Ascending aorta (tissue), 2 donors: ENCODE measurements at regions of chr9 and their contacts with region 1.

Region 1: DNA sequence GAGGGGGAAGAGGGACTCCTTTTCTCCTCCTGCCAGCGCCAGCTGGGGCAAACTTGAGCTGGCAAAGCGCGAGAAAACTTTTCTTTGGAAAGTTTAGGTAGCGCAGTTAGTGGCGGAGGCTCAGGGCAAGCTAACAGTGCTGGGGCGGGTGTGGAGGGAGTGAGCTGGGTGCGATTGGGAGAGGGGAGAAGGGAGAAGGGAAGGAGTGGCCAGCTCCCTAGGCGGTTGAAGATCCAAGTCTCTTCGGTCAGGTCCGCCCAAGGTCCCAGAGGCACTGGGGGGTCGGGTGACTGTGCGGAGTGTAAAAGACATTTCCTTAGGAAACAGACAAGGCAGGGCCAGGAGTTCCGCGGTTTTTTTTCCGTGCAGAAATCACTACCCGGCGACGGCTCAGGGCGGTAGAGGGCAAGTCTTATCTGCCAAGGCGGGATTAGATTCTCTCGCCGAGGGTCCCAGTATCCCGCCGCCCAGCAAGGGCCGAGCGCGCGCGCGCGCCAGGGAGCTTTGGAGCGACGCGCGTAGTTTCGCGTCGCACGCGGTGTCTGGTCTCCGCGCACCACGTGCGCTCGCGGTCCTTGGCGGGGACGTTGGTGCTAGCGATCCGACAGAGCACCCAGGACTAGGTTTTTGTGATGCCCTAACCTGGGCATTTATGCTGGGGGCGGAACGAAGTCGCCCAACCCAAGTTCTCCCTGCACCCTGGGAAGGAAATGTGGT is 33.6 kb upstream of the NFIB start:
- DNase-seq: no peak
- H3K4me3 ChIP-seq: peak overlapping the region; percentile 58 to 68
- H3K27ac ChIP-seq: peak overlapping the region; percentile 87 to 90
- H3K4me1 ChIP-seq: peaks cover 0 to 33% of the 10 kb centered on the region in 2 donors
- H3K27me3 ChIP-seq: no peaks in the 10 kb centered on the region
- CTCF ChIP-seq: peak in 1 of 3 experiments; percentile 26

Region 2: GRCh38 chr9:14030375-14031059 is 317.0 kb before region 1 on chr9:
- intact Hi-C with region 1: loop called (anchors 5 kb)
- DNase-seq: no peak
- H3K4me3 ChIP-seq: peak overlapping the region; percentile 39 to 58
- H3K27ac ChIP-seq: peak overlapping the region; percentile 80 to 84
- H3K4me1 ChIP-seq: peaks cover 6 to 24% of the 10 kb centered on the region in 2 donors
- H3K27me3 ChIP-seq: no peaks in the 10 kb centered on the region
- CTCF ChIP-seq: no peak

Region 3: DNA sequence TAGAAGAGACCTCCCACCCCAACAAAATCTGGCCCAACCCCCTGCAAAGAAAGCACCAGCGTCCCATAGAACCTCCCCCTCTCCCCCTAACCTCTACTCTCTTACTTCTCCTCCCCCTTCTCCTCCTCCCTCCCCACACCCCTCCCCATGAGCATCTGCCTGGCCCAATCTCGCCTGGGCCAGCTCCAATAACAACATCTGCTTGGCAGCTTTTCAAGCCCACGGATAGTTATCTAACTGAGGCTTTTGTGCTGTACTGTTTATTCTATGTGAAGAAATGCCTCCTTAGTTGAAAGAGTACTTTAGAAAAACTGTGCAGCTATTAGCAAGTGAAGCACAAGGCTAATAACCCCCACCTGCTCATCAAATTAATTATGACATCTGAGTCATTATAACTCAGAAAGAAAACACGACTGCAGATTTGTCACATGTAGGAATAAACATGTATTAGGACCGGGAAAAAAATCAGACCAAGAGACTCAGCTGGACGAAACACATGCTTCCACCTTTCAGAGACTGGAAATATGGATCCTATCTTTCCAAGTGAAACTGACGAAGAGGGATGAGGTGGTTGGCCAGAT is 76.4 kb before region 1 on chr9:
- intact Hi-C with region 1: no loop called
- DNase-seq: no peak
- H3K4me3 ChIP-seq: peak overlapping the region in 1 of 2 donors; percentile 1
- H3K27ac ChIP-seq: no peak overlapping the region
- H3K4me1 ChIP-seq: peaks cover 13 to 44% of the 10 kb centered on the region in 2 donors
- H3K27me3 ChIP-seq: no peaks in the 10 kb centered on the region
- CTCF ChIP-seq: no peak

Region 4: DNA sequence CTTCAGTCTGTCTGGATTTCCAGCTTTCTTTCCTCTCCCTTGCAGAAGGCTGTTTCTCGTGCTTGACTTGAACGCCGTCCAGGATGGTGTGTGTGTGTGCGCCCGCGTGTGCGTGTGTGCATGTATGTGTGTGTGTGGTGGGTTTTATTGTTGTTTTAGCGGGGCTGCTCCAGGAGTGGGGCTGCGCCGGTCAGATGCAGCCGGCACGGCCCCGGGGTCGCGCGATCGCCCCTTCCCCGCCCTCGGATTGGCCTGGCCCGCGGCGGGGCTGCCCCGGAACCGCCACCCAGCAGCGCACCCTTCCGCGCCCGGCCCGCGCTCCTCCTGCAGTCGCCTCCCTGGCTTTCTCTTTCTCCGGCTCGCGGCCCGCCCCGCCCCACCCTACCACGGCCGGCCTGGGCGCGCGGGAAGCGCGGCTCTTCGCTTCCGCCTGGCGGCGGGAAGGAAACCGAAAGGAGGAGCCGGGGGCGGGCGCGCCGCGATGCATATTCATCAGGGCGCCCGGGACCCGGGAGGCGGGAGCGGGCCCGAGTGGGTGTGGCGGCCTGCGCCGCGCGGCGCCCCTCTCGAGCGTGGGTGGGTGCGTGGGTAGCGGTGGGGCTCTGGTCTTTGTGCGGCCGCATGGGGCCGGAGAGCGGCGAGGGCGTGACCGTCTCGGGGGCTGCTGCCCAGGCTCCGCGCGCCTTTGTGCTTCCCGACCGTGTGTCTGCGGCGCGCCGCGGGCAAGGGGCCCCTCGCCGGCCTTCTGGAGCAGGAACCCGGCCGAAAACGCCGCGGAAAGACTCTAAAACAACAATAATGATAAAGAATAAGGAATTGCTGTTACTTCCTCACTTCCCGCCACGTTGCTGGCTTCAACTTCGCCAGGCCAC is 25.1 kb before region 1 on chr9:
- intact Hi-C with region 1: loop called (anchors 1 kb)
- DNase-seq: peak; percentile 51 to 94
- H3K4me3 ChIP-seq: peak overlapping the region; percentile 88 to 95
- H3K27ac ChIP-seq: peak overlapping the region; percentile 96 to 98
- H3K4me1 ChIP-seq: peaks cover 7 to 24% of the 10 kb centered on the region in 2 donors
- H3K27me3 ChIP-seq: no peaks in the 10 kb centered on the region
- CTCF ChIP-seq: peak; percentile 47 to 69 (median 63)

Region 5: DNA sequence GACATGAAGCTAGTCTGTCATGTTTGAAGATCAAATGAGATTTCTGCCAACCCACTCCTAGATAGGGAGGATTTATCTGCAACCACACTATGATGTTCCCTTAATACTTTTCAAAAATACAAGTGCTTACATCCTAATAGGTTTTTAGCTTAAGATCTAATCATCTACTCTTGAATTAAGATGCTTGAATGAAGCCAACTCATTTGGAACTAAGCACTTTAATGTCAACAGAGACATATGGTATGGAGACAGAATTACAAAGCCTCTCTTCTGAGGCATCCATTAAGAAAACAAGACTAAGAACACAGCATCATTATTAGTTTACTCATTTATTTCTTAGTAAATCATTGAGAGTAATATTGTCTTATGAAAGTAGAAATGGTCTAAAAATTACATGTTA is 105.7 kb after region 1 on chr9:
- intact Hi-C with region 1: no loop called
- DNase-seq: no peak
- H3K4me3 ChIP-seq: no peak overlapping the region
- H3K27ac ChIP-seq: no peak overlapping the region
- H3K4me1 ChIP-seq: no peaks in the 10 kb centered on the region
- H3K27me3 ChIP-seq: no peaks in the 10 kb centered on the region
- CTCF ChIP-seq: no peak